CD8-positive, alpha-beta T cell (primary cell): ENCODE measurements at regions of chr12 and their contacts with region 1.

Region 1: GRCh38 chr12:104951759-104952509 is 6.2 kb downstream of the SLC41A2 start:
- DNase-seq: no peak
- ATAC-seq: no peak
- H3K4me3 ChIP-seq: no peak overlapping the region
- H3K4me3 Mint-ChIP-seq: no peak overlapping the region
- H3K27ac ChIP-seq: no peak overlapping the region
- H3K27ac Mint-ChIP-seq: no peak overlapping the region
- H3K4me1 ChIP-seq: no peaks in the 10 kb centered on the region
- H3K4me1 Mint-ChIP-seq: peaks cover 3% of the 10 kb centered on the region
- H3K27me3 ChIP-seq: no peaks in the 10 kb centered on the region
- H3K27me3 Mint-ChIP-seq: no peaks in the 10 kb centered on the region
- CTCF ChIP-seq: no peak

Region 2: DNA sequence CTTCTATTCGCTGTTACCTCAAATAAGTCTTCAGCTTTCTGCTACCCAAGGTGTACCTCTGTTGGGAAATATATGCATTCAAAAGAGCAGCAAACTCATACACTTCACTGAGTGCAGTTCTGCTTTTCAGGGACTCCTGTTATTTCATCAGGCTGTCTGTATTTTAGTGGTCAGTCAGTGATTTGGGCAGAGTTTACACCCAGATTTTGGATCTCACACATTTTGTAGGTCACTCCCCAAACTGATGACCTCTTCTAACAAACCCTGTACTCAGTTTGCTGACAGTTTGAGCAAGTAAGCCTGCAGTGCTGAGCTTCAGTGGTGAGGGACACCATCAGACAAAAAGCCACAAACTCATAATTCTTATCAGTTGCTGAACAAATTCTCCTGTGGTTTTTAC is 147.4 kb after region 1 on chr12:
- CTCF ChIA-PET with region 1: no interaction called
- POLR2A ChIA-PET with region 1: no interaction called
- intact Hi-C with region 1: loop called in 1 of 2 experiments (anchors 5 kb)
- DNase-seq: no peak
- ATAC-seq: no peak
- H3K4me3 ChIP-seq: no peak overlapping the region
- H3K4me3 Mint-ChIP-seq: no peak overlapping the region
- H3K27ac ChIP-seq: no peak overlapping the region
- H3K27ac Mint-ChIP-seq: no peak overlapping the region
- H3K4me1 ChIP-seq: no peaks in the 10 kb centered on the region
- H3K4me1 Mint-ChIP-seq: no peaks in the 10 kb centered on the region
- H3K27me3 ChIP-seq: peaks cover 0 to 3% of the 10 kb centered on the region in 2 experiments
- H3K27me3 Mint-ChIP-seq: peaks cover 7% of the 10 kb centered on the region
- CTCF ChIP-seq: no peak